ENCODE measurements at regions of chr5 and their contacts with region 1.

Region 1: GRCh38 chr5:178279725-178280438 is 47.3 kb upstream of the PHYKPL start:
- DNase-seq: peak; percentile 91
- H3K4me3 ChIP-seq: no peak overlapping the region
- H3K27ac ChIP-seq: no peak overlapping the region
- H3K4me1 ChIP-seq: peaks cover 0 to 9% (median 7%) of the 10 kb centered on the region in 4 donors
- H3K27me3 ChIP-seq: peaks cover 0 to 27% (median 0%) of the 10 kb centered on the region in 3 donors
- CTCF ChIP-seq: peak; percentile 70 to 87 (median 84)
- EP300 ChIP-seq: no peak
- POLR2A ChIP-seq: no peak

Region 2: DNA sequence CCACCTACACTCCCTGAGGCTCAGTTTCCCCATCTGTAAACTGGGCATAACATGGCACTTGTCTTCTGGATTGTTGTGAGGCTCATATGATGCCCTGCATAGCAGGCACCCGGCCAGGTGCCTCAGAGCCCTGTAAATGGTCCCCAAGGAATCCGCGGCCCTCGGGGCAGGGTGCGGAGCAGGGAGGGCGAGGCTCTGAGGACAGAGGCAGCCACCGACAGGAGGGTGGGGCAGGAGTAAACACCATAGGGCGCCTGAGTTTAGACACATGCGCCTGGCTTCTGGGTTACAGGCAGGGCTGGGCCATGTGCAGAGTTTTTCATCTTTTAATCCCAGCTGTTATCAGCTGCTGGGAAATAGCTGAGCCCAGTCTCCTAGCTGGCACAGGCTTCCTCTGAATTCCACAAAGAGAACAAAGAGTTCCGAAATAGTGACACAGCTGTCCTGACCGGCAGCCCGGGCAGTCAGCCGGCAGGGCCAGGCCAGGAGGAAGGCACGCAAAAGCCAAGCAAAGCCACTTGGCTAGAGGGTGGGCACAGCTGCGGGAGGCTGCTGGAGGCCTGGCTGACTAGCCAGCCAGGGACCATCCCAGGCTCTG is 51.6 kb after region 1 on chr5:
- intact Hi-C with region 1: no loop called
- DNase-seq: peak; percentile 74
- H3K4me3 ChIP-seq: no peak overlapping the region
- H3K27ac ChIP-seq: peak overlapping the region in 3 of 4 donors; percentile 45 to 66 (median 57)
- H3K4me1 ChIP-seq: peaks cover 0 to 25% (median 16%) of the 10 kb centered on the region in 4 donors
- H3K27me3 ChIP-seq: no peaks in the 10 kb centered on the region
- CTCF ChIP-seq: no peak
- EP300 ChIP-seq: peak in 2 of 4 donors; percentile 25 to 37
- POLR2A ChIP-seq: no peak

Region 3: DNA sequence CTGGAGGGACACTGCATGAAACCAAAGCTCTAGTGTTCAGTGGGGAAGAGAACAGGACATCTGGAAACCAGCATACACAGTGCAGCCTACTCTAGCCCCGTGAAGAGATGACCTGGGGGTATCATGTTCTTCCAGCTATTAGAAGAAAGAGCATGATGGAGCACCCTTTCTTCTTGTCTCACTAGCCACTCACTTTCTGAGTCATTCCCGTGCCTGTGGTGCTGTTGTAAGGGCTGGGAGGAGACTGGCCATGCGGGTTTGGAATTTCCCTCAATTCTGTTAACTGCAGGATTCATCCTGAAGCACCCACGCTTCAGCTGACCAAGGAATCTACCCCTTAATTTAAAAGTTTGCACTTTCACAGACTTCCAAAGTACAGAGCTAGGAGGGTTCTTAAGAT is 173.3 kb after region 1 on chr5:
- intact Hi-C with region 1: loop called (anchors 10 kb)
- DNase-seq: no peak
- H3K4me3 ChIP-seq: no peak overlapping the region
- H3K27ac ChIP-seq: no peak overlapping the region
- H3K4me1 ChIP-seq: no peaks in the 10 kb centered on the region
- H3K27me3 ChIP-seq: no peaks in the 10 kb centered on the region
- CTCF ChIP-seq: no peak
- EP300 ChIP-seq: no peak
- POLR2A ChIP-seq: no peak

Region 4: DNA sequence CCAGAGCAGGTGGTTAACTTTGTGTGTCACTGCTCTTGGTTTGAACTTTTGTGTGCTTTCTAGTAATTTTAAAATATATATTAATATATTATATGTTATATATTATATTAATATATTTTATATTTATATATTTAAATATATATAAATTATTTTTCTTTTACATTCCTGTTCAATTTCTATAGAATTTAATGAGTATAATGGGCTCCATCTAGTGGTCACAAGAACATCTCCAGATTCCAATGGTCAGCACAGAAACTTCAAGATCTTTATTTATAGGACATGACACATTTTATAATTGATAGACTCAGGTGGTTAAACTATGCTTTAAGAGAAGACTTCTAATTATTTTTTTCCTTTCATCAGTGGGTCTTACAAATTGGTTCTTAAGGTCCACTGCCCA is 271.2 kb after region 1 on chr5:
- intact Hi-C with region 1: loop called (anchors 1 kb)
- DNase-seq: no peak
- H3K4me3 ChIP-seq: no peak overlapping the region
- H3K27ac ChIP-seq: no peak overlapping the region
- H3K4me1 ChIP-seq: peaks cover 0 to 8% (median 0%) of the 10 kb centered on the region in 4 donors
- H3K27me3 ChIP-seq: peaks cover 0 to 4% (median 0%) of the 10 kb centered on the region in 3 donors
- CTCF ChIP-seq: peak in 2 of 4 experiments; percentile 9 to 37
- EP300 ChIP-seq: no peak
- POLR2A ChIP-seq: no peak

Region 5: GRCh38 chr5:178590141-178590923 is 310.4 kb after region 1 on chr5 and contains the start of gene COL23A1:
- intact Hi-C with region 1: loop called (anchors 1 kb)
- DNase-seq: peak; percentile 77
- H3K4me3 ChIP-seq: peak within 1 kb of the TSS; percentile 26 to 60 (median 48)
- H3K27ac ChIP-seq: peak within 1 kb of the TSS in 3 of 4 donors; percentile 0 to 56 (median 55)
- H3K4me1 ChIP-seq: peaks cover 0 to 27% (median 21%) of the 10 kb centered on the region in 4 donors
- H3K27me3 ChIP-seq: peaks cover 3 to 23% (median 20%) of the 10 kb centered on the region in 3 donors
- CTCF ChIP-seq: peak; percentile 27 to 64 (median 57)
- EP300 ChIP-seq: no peak
- POLR2A ChIP-seq: no peak
- total RNA-seq, gene COL23A1: 0.28 to 1.2 (median 0.52) TPM

Measured in sigmoid colon (tissue), 7 donors.